Natural killer cell (primary cell): ENCODE measurements at regions of chr12 and their contacts with region 1.

Region 1: GRCh38 chr12:48681738-48682532 is at the start of gene KANSL2:
- DNase-seq: peak; percentile 93 to 98
- ATAC-seq: peak; percentile 95 to 99 (median 95)
- H3K4me3 ChIP-seq: peak within 1 kb of the TSS; percentile 89
- H3K4me3 Mint-ChIP-seq: peak within 1 kb of the TSS; percentile 94
- H3K27ac ChIP-seq: peak within 1 kb of the TSS; percentile 93
- H3K27ac Mint-ChIP-seq: peak within 1 kb of the TSS; percentile 92 to 98
- H3K4me1 ChIP-seq: peaks cover 26% of the 10 kb centered on the region
- H3K4me1 Mint-ChIP-seq: peaks cover 37 to 49% of the 10 kb centered on the region in 2 donors
- H3K27me3 ChIP-seq: no peaks in the 10 kb centered on the region
- H3K27me3 Mint-ChIP-seq: no peaks in the 10 kb centered on the region
- CTCF ChIP-seq: no peak
- total RNA-seq, gene KANSL2: 103 to 132 (median 125) TPM

Region 2: GRCh38 chr12:48716493-48717251 is 34.7 kb after region 1 on chr12 and contains the start of gene CCNT1:
- intact Hi-C with region 1: loop called (anchors 1 kb)
- DNase-seq: peak; percentile 97 to 100
- ATAC-seq: peak; percentile 87 to 95 (median 88)
- H3K4me3 ChIP-seq: peak within 1 kb of the TSS; percentile 69
- H3K4me3 Mint-ChIP-seq: peak within 1 kb of the TSS; percentile 95
- H3K27ac ChIP-seq: peak within 1 kb of the TSS; percentile 93
- H3K27ac Mint-ChIP-seq: peak within 1 kb of the TSS; percentile 94 to 99
- H3K4me1 ChIP-seq: peaks cover 29% of the 10 kb centered on the region
- H3K4me1 Mint-ChIP-seq: peaks cover 38 to 40% of the 10 kb centered on the region in 2 donors
- H3K27me3 ChIP-seq: no peaks in the 10 kb centered on the region
- H3K27me3 Mint-ChIP-seq: peaks cover 0 to 5% of the 10 kb centered on the region in 2 donors
- CTCF ChIP-seq: peak; percentile 12
- total RNA-seq, gene CCNT1: 119 to 145 (median 120) TPM

Region 3: DNA sequence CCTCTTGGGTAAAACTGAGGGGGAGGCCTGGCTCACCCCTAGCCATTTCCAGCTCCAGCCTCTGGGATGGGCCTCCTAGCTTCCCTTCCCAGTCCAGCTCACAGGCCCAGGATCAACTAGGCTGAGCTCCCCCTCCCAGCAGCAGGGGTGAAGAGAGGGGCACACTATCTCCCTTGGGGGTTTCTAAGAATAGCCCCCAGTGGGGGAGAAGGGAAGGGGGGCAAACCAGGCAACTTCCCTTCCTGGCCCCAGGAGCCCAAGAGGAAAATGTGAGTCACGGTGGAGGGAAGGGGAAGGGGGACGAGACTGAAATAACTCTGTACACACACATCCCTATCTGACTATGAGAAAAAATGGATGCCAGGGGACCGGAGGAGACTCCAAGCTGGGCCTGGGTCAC is 97.9 kb after region 1 on chr12:
- intact Hi-C with region 1: no loop called
- DNase-seq: no peak
- ATAC-seq: no peak
- H3K4me3 ChIP-seq: no peak overlapping the region
- H3K4me3 Mint-ChIP-seq: no peak overlapping the region
- H3K27ac ChIP-seq: no peak overlapping the region
- H3K27ac Mint-ChIP-seq: no peak overlapping the region
- H3K4me1 ChIP-seq: no peaks in the 10 kb centered on the region
- H3K4me1 Mint-ChIP-seq: no peaks in the 10 kb centered on the region
- H3K27me3 ChIP-seq: no peaks in the 10 kb centered on the region
- H3K27me3 Mint-ChIP-seq: peaks cover 0 to 1% of the 10 kb centered on the region in 2 donors
- CTCF ChIP-seq: no peak

Region 4: DNA sequence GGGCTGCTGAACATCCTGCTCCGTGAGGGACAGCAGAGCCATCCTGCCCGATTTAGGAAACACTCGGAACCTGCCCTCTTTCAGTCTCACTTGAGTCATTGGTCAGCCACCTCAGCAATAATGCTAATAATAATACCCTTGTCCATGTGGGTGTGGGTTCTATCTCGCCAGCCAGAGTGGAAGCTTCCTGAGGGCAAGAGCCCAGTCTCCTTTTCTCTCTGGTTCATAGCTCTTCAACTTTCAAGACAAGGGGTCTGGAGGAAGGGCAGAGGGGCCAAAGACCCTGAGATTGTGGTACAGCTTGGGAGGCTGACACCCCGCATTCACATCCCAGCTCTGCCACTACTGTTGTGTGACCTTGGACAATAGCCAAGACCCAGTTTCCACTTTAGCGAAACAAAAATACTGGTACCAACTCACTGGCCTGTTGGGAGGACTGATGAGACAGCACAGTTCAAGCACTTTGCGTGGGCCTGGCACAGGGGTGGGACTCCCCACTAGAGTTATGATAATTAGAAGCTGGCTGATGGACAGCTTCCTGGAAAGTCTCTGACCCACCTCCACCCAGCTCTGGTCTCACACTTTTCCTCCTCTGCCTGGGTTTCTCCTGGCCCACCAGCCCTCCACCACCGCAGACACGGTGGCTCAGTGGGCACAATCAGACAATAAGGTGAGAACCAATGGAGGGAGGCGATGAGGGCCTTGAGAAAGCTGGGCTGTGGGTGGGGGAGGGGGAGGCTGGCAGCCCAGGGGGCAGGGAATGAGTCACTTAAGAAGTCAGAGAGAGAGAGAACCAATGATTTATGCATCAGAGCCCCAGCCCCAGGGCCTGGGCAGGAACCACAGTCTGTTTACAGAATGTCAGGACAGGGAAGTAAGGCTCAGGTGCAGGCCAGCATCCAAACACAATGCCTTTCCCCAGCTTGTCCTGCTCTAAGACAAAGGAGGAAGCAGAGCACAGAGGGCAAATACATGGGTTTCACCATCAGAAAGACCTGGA is 1212.1 kb after region 1 on chr12:
- intact Hi-C with region 1: no loop called
- DNase-seq: no peak
- ATAC-seq: no peak
- H3K4me3 ChIP-seq: no peak overlapping the region
- H3K4me3 Mint-ChIP-seq: no peak overlapping the region
- H3K27ac ChIP-seq: no peak overlapping the region
- H3K27ac Mint-ChIP-seq: no peak overlapping the region
- H3K4me1 ChIP-seq: no peaks in the 10 kb centered on the region
- H3K4me1 Mint-ChIP-seq: no peaks in the 10 kb centered on the region
- H3K27me3 ChIP-seq: no peaks in the 10 kb centered on the region
- H3K27me3 Mint-ChIP-seq: peaks cover 6 to 16% of the 10 kb centered on the region in 2 donors
- CTCF ChIP-seq: no peak

Region 5: DNA sequence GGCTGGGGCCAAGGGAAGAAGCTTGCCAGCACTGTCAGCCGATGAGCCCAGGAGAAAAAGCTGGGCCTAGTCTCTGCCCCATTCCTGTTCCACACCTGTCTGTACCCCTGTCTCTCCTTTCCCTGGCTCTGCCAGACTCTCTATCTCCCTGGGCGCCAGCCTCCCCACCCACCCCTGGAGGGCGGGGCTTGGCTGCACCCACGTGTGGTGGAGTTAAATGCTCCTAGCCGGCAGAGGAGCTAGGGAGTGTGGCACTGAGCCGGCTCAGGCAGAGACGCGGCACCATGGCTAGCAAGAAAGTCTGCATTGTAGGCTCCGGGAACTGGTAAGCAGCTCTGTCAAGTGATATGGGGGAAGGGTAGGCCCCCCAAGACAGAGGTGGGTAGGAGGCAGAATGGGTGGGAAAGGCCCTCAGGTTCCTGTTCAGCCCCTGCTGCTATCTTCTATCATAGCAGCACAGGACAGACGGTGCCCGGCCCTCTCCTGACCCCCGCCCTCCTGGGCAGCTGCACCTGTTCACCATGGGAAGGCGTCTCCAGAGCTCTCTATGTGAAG is 1421.9 kb after region 1 on chr12 and contains the start of gene GPD1:
- intact Hi-C with region 1: no loop called
- DNase-seq: no peak
- ATAC-seq: no peak
- H3K4me3 ChIP-seq: no peak within 1 kb of the TSS
- H3K4me3 Mint-ChIP-seq: no peak within 1 kb of the TSS
- H3K27ac ChIP-seq: no peak within 1 kb of the TSS
- H3K27ac Mint-ChIP-seq: peak within 1 kb of the TSS in 1 of 2 donors; percentile 52
- H3K4me1 ChIP-seq: no peaks in the 10 kb centered on the region
- H3K4me1 Mint-ChIP-seq: no peaks in the 10 kb centered on the region
- H3K27me3 ChIP-seq: no peaks in the 10 kb centered on the region
- H3K27me3 Mint-ChIP-seq: peaks cover 0 to 3% of the 10 kb centered on the region in 2 donors
- CTCF ChIP-seq: no peak
- total RNA-seq, gene GPD1: 0.65 TPM in 1 of 3 donors, not detected in the others